BJ (cell line): ENCODE measurements at regions of chr5 and their contacts with region 1.

Region 1: DNA sequence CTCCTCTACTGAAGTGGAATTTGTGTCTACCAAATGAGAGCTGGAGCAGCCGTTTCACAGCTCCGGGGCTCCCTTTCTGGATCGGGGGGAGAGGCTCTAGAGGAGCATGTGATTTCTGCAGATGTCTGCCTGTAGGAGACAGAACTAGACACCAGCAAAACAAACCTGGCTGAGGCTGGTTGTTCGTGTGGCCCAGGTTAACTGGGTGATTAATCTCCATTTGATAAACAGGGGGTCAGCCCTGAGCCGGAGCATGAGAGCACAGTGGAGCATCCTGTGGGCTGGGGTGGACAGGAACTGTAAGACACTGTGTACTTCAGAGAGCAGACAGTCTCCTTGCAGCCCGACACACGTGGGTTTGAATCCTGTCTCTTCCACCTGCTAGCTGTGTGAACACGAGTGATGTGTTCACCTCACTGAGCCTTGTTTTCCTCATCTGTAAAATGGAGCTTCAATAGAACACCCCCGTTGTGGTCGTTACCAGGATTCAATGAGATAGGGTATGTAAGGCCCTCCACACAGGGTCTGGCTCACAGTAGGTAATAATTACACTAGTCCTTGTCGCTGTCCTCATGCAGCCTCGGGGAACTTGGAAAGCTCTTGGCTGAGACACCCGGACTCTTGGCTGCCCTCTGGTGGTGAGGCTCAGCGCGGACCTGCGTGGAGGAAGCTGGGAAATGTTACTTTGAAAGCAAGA is 12.9 kb downstream of the CXCL14 start:
- DNase-seq: no peak
- H3K4me3 ChIP-seq: no peak overlapping the region
- H3K27me3 ChIP-seq: peaks cover 6% of the 10 kb centered on the region; the same call in 1 of the 2 replicates
- CTCF ChIP-seq: peak; percentile 97

Region 2: GRCh38 chr5:135208903-135209721 is 356.8 kb before region 1 on chr5:
- CTCF ChIA-PET with region 1: no interaction called
- POLR2A ChIA-PET with region 1: no interaction called
- DNase-seq: peak; percentile 74
- H3K4me3 ChIP-seq: no peak overlapping the region
- H3K27me3 ChIP-seq: no peaks in the 10 kb centered on the region
- CTCF ChIP-seq: peak; percentile 51

Region 3: GRCh38 chr5:135501965-135502364 is 63.9 kb before region 1 on chr5:
- CTCF ChIA-PET with region 1: no interaction called
- POLR2A ChIA-PET with region 1: no interaction called
- DNase-seq: no peak
- H3K4me3 ChIP-seq: no peak overlapping the region
- H3K27me3 ChIP-seq: peaks cover 2% of the 10 kb centered on the region
- CTCF ChIP-seq: no peak

Region 4: DNA sequence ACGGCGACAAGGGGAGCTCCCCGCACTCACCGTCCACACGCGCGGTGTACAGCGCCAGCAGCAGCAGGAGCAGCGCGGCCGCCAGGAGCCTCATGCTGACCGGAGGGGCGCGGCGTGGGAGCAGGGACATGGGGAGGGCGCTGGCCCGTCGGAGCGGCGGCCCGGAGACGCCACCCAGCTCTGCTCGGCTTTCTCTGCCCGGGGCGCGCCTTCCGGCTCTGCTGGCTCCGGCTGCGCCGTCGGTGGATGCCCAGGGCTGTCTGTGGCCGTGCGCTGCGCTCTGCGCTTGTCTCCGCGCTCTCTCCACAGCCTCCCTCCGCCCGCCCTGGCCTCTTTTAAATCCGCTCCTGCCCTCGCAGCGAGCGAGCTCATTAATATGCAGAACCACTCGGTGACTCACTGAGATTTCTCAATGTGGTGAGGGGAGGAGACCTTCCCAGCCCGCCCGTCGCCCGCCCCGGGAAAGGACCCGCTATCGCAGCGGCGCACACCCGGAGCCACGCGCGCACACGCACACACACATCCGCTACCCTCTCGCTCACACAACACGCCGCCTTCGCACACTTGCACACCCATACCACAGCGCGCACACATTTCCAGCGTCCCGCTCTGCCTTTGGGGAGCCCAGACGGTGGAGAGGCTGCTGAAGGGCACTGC is 12.9 kb after region 1 on chr5 and contains the start of gene CXCL14:
- CTCF ChIA-PET with region 1: interaction called, 42 read pairs
- POLR2A ChIA-PET with region 1: interaction called, 5 read pairs
- DNase-seq: no peak
- H3K4me3 ChIP-seq: peak within 1 kb of the TSS; percentile 41
- H3K27me3 ChIP-seq: peaks cover 25% of the 10 kb centered on the region
- CTCF ChIP-seq: no peak
- polyA plus RNA-seq, gene CXCL14: 1.5 and 1.6 TPM in 2 replicates

Region 5: GRCh38 chr5:135635451-135635850 is 69.6 kb after region 1 on chr5:
- CTCF ChIA-PET with region 1: no interaction called
- POLR2A ChIA-PET with region 1: no interaction called
- DNase-seq: no peak
- H3K4me3 ChIP-seq: no peak overlapping the region
- H3K27me3 ChIP-seq: peaks cover 4% of the 10 kb centered on the region
- CTCF ChIP-seq: no peak

Region 6: GRCh38 chr5:135821061-135821801 is 255.4 kb after region 1 on chr5:
- CTCF ChIA-PET with region 1: interaction called, 12 read pairs
- POLR2A ChIA-PET with region 1: no interaction called
- DNase-seq: no peak
- H3K4me3 ChIP-seq: no peak overlapping the region
- H3K27me3 ChIP-seq: no peaks in the 10 kb centered on the region; the same call in 1 of the 2 replicates
- CTCF ChIP-seq: no peak

Region 7: DNA sequence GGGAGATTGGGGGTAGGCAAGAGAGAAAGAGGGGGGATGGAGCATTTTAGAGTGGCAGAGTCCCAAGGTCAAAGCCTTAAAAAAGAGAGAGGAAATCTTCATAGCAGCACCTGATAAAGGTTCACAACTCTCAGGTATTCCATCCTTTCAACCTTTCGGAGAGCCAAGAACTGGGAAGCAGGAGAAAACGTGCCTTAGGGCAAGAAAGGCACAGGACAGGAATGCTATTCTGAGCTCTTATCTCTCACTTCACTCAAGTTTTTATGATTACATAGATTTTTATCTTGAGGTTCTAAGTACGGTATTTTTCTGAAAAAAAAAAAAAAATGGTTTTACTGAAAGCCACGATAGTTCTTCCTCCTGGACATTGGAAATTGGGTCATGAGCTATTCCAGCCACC is 532.3 kb after region 1 on chr5:
- CTCF ChIA-PET with region 1: no interaction called
- POLR2A ChIA-PET with region 1: interaction called, 10 read pairs
- DNase-seq: no peak
- H3K4me3 ChIP-seq: no peak overlapping the region
- H3K27me3 ChIP-seq: no peaks in the 10 kb centered on the region; the same call in 1 of the 2 replicates
- CTCF ChIP-seq: no peak